Right cardiac atrium (tissue), 5 donors: ENCODE measurements at regions of chr12 and their contacts with region 1.

Region 1: DNA sequence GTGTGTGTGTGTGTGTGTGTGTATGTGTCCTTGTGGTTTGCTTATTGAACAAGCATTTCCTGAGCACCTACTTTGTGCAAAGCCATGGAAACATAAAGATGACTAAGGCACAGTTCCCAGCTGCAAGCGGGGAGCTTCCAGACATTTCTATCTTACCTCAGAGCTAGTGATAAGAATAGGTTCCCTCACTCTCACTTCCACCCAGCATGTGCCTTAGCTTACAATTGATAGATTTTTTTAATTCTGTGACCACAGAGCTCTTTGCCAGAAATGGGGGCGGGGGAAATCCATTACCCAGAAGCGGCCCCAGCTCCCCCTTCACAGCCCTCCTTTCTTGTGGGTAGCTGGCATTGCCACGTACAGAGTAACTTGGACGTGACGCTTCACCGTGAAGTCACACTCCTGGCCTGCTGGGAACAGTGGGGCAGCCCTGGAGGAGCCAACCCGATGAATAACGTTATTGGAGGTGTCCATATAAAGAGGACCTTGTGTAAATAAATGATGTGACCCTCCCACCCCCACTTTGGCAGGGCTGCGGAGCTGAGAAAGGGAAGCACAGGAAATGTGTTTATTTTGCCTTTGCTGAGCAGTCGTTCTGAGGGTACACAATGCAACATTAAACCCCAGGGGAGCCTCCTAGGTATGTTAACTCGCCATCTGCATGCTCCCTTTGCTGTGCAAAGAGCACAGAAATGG is 238.9 kb downstream of the CHST11 start:
- DNase-seq: peak in 1 of 3 donors; percentile 36
- ATAC-seq: peak; percentile 20 to 46
- H3K4me3 ChIP-seq: no peak overlapping the region
- H3K27ac ChIP-seq: no peak overlapping the region
- H3K4me1 ChIP-seq: peaks cover 21% of the 10 kb centered on the region
- H3K27me3 ChIP-seq: no peaks in the 10 kb centered on the region

Region 2: DNA sequence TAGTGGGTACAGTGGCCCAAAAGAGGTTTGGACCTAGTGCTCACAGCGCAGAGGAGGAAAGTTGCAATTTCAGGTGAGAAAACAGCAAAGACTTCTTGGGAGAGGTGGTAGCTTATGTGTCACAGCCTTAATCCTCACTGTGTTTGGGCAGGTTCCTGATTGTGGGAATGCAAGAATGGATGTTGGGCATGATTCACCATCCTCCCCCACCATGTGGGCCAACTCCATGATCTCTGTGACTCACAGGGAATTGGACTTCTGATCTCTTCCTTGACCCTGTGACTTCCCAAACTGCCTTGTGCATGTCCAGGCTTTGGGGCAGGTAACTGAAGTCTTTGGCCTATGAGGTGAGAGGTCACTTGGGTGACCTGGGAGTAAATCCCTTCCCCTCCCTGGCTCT is 240.6 kb before region 1 on chr12:
- intact Hi-C with region 1: no loop called
- DNase-seq: no peak
- ATAC-seq: no peak
- H3K4me3 ChIP-seq: no peak overlapping the region
- H3K27ac ChIP-seq: no peak overlapping the region
- H3K4me1 ChIP-seq: no peaks in the 10 kb centered on the region
- H3K27me3 ChIP-seq: no peaks in the 10 kb centered on the region

Region 3: DNA sequence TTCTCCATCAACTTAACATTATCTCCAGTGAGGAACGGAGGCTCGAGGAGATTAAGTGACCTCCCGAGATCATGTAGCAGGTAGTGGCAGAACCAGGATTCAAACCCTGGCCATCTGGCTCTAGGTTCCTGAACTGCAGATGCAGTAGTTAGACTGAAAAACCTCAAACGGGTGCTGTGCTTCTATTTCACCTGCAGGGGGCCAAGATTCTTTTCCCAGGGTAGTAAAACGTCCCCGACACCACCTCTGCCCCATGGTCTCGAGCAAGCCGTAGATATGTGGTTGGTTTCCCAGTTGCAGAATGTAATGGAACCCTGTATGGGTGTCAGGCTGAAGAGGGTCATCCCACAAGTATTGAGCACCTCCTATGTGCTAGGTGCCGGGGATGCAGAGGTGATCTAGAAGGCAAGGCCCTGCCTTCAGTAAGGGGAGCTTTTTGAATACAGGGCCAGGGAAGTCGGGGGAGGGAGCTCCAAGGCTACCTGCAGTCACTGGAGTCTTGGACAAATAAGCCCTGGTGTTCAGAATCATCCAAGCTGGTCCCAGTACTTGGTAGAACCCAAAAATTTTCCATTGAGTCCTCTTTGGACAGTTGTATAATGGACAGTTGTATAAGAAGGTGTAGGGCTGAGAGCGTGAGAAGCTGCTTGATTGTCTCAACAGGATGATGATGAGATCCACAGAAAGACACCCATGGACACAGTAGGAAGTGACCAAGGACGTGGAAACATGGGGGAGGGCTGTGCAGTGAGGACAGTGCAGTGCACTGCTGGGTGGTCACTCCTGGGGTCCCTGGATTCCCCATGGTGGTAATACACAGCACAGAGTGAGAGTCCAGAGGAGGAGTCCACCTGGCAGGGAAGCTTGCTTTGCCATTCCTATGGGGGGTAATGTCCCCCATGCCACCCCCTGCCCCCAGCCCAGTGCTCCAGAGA is 41.6 kb before region 1 on chr12:
- intact Hi-C with region 1: loop called in 1 of 4 experiments (anchors 2 kb)
- DNase-seq: no peak
- ATAC-seq: no peak
- H3K4me3 ChIP-seq: no peak overlapping the region
- H3K27ac ChIP-seq: no peak overlapping the region
- H3K4me1 ChIP-seq: no peaks in the 10 kb centered on the region
- H3K27me3 ChIP-seq: no peaks in the 10 kb centered on the region